Activated T-helper 2 cell treated with anti-CD3 and anti-CD28 coated beads, Interferon-gamma antibody, Interleukin-2, Interleukin-4, amounts not matched to agents 10 μg/mL and 5 μg/mL and 100 μg/mL, durations not matched to agents 14 hours and 24 hours and 36 hours (primary cell): ENCODE measurements at regions of chr14 and their contacts with region 1.

Region 1: GRCh38 chr14:55270832-55271565 is at the start of gene FBXO34:
- DNase-seq: peak; percentile 99
- H3K4me3 Mint-ChIP-seq: peak within 1 kb of the TSS; percentile 86
- H3K27ac Mint-ChIP-seq: peak within 1 kb of the TSS; percentile 92
- H3K4me1 Mint-ChIP-seq: peaks cover 40% of the 10 kb centered on the region
- H3K27me3 Mint-ChIP-seq: no peaks in the 10 kb centered on the region
- total RNA-seq, gene FBXO34: 19.7 and 23.0 TPM in 2 replicates

Region 2: DNA sequence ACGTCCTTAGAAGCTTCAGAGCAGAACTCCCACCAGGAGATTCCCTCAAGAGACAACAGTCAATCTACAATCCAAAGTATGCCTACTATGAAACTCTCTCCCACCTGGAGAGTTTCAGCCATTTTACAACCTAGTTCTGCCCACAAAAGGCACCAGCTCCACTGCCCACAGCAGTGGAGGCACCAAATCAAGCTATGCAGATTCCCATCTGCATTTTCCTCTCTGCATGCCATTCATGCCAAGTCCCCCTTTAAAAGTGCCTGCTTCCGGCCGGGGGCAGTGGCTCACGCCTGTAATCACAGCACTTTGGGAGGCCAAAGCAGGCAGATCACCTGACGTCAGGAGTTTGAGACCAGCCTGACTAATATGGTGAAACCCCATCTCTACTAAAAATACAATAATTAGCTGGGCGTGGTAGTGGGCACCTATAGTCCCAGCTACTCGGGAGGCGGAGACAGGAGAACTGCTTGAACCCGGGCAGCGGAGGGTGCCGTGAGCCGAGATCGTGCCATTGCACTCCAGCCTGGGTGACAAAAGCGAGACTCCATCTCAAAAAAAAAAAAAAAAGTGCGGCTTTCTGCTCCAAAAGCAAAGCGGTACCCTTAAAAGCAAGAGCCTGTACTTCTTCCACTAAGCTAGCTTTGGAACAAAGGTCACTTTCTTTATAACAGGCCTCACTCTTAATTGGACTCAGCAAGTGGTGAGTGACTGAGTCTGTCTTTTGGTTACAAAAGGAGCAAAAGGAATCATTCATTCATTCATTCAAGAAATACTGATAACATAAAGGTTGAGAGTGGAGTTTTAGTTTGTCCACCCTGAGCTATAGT is 69.6 kb before region 1 on chr14:
- intact Hi-C with region 1: no loop called
- DNase-seq: no peak
- H3K4me3 Mint-ChIP-seq: no peak overlapping the region
- H3K27ac Mint-ChIP-seq: no peak overlapping the region
- H3K4me1 Mint-ChIP-seq: no peaks in the 10 kb centered on the region
- H3K27me3 Mint-ChIP-seq: peaks cover 26% of the 10 kb centered on the region

Region 3: GRCh38 chr14:55212634-55213033 is 58.4 kb before region 1 on chr14:
- intact Hi-C with region 1: loop called (anchors 1 kb)
- DNase-seq: no peak
- H3K4me3 Mint-ChIP-seq: no peak overlapping the region
- H3K27ac Mint-ChIP-seq: no peak overlapping the region
- H3K4me1 Mint-ChIP-seq: peaks cover 5% of the 10 kb centered on the region
- H3K27me3 Mint-ChIP-seq: peaks cover 3% of the 10 kb centered on the region

Region 4: GRCh38 chr14:55354500-55354899 is 83.5 kb after region 1 on chr14:
- intact Hi-C with region 1: loop called (anchors 1 kb)
- DNase-seq: peak; percentile 49
- H3K4me3 Mint-ChIP-seq: no peak overlapping the region
- H3K27ac Mint-ChIP-seq: peak overlapping the region; percentile 62
- H3K4me1 Mint-ChIP-seq: peaks cover 28% of the 10 kb centered on the region
- H3K27me3 Mint-ChIP-seq: no peaks in the 10 kb centered on the region

Region 5: GRCh38 chr14:55411426-55412389 is 140.7 kb after region 1 on chr14 and contains the start of gene ATG14:
- intact Hi-C with region 1: loop called (anchors 10 kb)
- DNase-seq: peak; percentile 71
- H3K4me3 Mint-ChIP-seq: peak within 1 kb of the TSS; percentile 86
- H3K27ac Mint-ChIP-seq: peak within 1 kb of the TSS; percentile 88
- H3K4me1 Mint-ChIP-seq: peaks cover 31% of the 10 kb centered on the region
- H3K27me3 Mint-ChIP-seq: peaks cover 2% of the 10 kb centered on the region
- total RNA-seq, gene ATG14: 4.3 and 4.6 TPM in 2 replicates